CD4-positive, alpha-beta memory T cell (primary cell): ENCODE measurements at regions of chr12 and their contacts with region 1.

Region 1: GRCh38 chr12:6278439-6279255 is 31.8 kb upstream of the PLEKHG6 start:
- DNase-seq: peak; percentile 74 to 88 (median 81)
- H3K4me3 ChIP-seq: peak overlapping the region in 1 of 2 donors; percentile 43
- H3K4me3 Mint-ChIP-seq: peak overlapping the region; percentile 61 to 86 (median 80)
- H3K27ac ChIP-seq: no peak overlapping the region
- H3K27ac Mint-ChIP-seq: peak overlapping the region in 1 of 7 donors; percentile 54
- H3K4me1 ChIP-seq: peaks cover 11% of the 10 kb centered on the region
- H3K4me1 Mint-ChIP-seq: peaks cover 2 to 10% (median 4%) of the 10 kb centered on the region in 4 donors
- H3K27me3 ChIP-seq: no peaks in the 10 kb centered on the region
- H3K27me3 Mint-ChIP-seq: peaks cover 9 to 34% of the 10 kb centered on the region in 2 donors

Region 2: GRCh38 chr12:5921966-5922899 is 356.4 kb before region 1 on chr12:
- CTCF ChIA-PET with region 1: no interaction called
- POLR2A ChIA-PET with region 1: no interaction called
- intact Hi-C with region 1: no loop called
- DNase-seq: no peak
- H3K4me3 ChIP-seq: no peak overlapping the region
- H3K4me3 Mint-ChIP-seq: no peak overlapping the region
- H3K27ac ChIP-seq: no peak overlapping the region
- H3K27ac Mint-ChIP-seq: no peak overlapping the region
- H3K4me1 ChIP-seq: no peaks in the 10 kb centered on the region
- H3K4me1 Mint-ChIP-seq: no peaks in the 10 kb centered on the region
- H3K27me3 ChIP-seq: no peaks in the 10 kb centered on the region
- H3K27me3 Mint-ChIP-seq: peaks cover 19 to 20% of the 10 kb centered on the region in 2 donors

Region 3: DNA sequence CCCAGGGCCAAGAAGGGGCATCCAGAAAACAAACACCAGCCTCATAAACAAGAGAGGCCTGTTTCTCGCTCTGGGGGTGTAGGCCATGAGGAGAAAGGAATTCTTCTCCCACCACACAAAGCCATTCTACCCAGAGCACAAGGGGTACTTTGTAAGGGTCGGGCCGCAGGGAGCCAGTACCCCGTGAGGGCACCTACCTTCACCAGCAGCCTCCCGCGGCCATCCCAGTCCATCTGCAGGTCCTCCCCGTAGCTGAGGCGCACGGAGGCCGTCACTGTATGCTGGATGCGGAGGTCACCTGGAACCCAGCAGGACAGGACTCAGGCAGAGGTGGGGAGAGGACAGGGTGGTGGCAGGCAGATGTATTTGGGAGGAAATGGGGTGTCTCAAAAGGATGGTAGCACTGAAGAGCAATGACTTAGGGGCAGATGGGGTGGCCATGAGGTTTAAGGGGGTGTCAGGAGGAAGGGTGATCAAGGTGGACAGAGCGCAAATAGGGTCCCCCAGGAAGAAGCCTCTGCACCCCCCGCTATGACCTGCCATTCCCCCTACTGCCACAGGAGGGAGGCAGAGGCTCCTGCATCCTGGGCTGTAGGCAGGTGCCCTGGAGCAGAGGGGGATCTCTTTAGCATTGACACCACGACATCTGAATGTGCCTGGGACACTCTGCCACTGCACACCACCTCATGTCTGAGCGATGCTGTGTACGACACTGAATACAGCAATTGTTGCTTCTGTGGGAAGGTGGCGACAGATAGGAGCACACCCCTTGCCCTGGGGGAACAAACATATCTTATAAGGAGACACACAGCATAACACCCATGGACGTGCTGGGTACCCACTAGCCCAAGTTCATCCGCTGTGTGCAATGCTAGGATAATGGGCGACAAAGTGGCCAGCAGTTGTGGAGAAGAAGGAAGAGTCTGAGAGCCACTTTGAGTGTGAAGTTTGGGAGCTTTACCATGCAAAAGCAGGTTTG is 215.6 kb before region 1 on chr12:
- CTCF ChIA-PET with region 1: interaction called, 5 read pairs
- POLR2A ChIA-PET with region 1: no interaction called
- intact Hi-C with region 1: loop called (anchors 1 kb)
- DNase-seq: peak in 4 of 5 donors; percentile 35 to 54 (median 40)
- H3K4me3 ChIP-seq: no peak overlapping the region
- H3K4me3 Mint-ChIP-seq: no peak overlapping the region
- H3K27ac ChIP-seq: no peak overlapping the region
- H3K27ac Mint-ChIP-seq: peak overlapping the region in 2 of 7 donors; percentile 19 to 60
- H3K4me1 ChIP-seq: no peaks in the 10 kb centered on the region
- H3K4me1 Mint-ChIP-seq: peaks cover 0 to 2% (median 0%) of the 10 kb centered on the region in 4 donors
- H3K27me3 ChIP-seq: no peaks in the 10 kb centered on the region
- H3K27me3 Mint-ChIP-seq: peaks cover 10% of the 10 kb centered on the region in 2 donors

Region 4: DNA sequence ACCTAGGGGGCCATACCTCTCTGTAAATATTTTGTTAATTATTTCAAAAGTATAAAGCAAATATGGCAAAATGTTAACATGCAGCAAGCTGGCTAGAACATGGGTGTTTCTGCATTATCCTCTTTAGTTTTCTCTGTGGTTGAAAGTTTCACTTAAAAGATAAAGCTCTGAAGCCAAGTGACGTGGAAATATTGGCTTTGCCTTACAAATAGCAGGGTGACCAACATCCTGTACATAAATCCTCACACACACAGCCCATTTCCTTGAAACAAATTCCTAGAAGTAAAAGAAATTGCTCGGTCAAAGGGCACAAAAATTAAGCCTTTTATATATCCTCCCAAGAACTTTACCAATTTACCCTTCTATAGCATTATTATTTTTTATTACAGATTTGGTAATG is 143.6 kb before region 1 on chr12:
- CTCF ChIA-PET with region 1: no interaction called
- POLR2A ChIA-PET with region 1: no interaction called
- intact Hi-C with region 1: no loop called
- DNase-seq: no peak
- H3K4me3 ChIP-seq: no peak overlapping the region
- H3K4me3 Mint-ChIP-seq: no peak overlapping the region
- H3K27ac ChIP-seq: no peak overlapping the region
- H3K27ac Mint-ChIP-seq: no peak overlapping the region
- H3K4me1 ChIP-seq: peaks cover 7% of the 10 kb centered on the region
- H3K4me1 Mint-ChIP-seq: peaks cover 5 to 9% (median 7%) of the 10 kb centered on the region in 4 donors
- H3K27me3 ChIP-seq: no peaks in the 10 kb centered on the region
- H3K27me3 Mint-ChIP-seq: no peaks in the 10 kb centered on the region

Region 5: DNA sequence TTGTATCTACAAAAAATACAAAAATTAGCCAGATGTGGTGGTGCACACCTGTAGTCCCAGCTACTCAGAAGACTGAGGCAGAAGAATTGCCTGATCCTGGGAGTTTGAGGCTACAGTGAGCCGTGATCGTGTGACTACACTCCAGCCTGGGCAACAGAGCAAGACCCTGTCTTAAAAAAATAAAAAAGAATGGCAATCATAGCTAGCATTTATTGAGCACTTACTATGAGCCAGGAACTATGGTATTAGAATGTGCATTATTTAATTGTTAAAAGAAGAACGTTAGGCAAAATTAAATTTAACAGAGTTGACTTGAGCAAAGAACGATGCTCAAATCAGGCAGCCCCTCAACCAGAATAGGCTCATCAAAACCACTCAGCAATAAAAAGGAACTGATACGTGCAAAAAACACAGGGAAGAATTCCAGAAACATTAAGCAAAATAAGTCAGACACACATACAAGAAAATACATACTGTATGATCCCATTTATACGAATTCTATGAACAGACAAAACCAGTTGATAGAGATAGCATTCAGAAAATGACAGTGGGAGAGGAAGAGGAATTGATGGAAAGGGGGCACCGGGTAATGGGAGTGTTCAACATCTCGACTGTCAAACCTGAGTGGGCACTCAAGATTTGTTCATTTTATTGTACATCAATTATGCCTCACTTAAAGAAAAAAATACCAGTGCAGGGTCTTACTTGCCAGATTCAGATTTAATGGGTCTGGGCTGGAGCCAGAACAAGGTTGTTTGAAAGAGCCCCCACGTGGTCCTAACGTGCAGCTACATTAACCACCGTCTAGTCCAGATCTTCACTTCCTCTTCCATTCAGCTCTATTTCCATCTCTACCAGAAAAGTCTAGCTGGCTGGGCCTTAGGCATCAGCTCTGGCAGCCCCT is 88.7 kb after region 1 on chr12:
- CTCF ChIA-PET with region 1: no interaction called
- POLR2A ChIA-PET with region 1: no interaction called
- intact Hi-C with region 1: no loop called
- DNase-seq: peak; percentile 36 to 55 (median 48)
- H3K4me3 ChIP-seq: no peak overlapping the region
- H3K4me3 Mint-ChIP-seq: peak overlapping the region in 1 of 8 donors; percentile 5
- H3K27ac ChIP-seq: no peak overlapping the region
- H3K27ac Mint-ChIP-seq: peak overlapping the region in 5 of 7 donors; percentile 30 to 84 (median 79)
- H3K4me1 ChIP-seq: peaks cover 26% of the 10 kb centered on the region
- H3K4me1 Mint-ChIP-seq: peaks cover 8 to 38% (median 13%) of the 10 kb centered on the region in 4 donors
- H3K27me3 ChIP-seq: no peaks in the 10 kb centered on the region
- H3K27me3 Mint-ChIP-seq: no peaks in the 10 kb centered on the region